Calu3 (cell line): ENCODE measurements at regions of chr4 and their contacts with region 1.

Region 1: DNA sequence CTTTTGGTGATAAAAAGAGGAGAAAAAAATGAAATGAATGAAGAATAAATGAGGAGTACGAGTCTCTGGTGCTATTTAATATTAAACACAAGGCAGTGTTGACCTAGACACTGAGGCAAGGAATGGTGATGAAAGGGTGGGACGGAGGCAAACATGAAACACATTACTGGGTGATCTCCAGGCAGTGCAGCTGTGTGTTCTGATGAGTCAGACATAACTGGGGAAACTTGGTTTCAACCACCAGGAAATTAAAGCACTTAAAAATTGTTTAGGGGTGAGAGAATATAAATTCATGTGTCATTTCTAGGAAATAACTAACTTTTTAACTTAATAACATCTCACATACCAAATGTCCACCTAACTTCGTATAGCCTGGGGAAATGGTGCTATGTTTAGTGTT is 19.7 kb upstream of the CXCL6 start:
- DNase-seq: peak; percentile 49
- H3K4me3 Mint-ChIP-seq: peak overlapping the region; percentile 5
- H3K27ac Mint-ChIP-seq: peak overlapping the region; percentile 95
- H3K4me1 Mint-ChIP-seq: peaks cover 57% of the 10 kb centered on the region
- H3K27me3 Mint-ChIP-seq: no peaks in the 10 kb centered on the region
- CTCF ChIP-seq: no peak

Region 2: GRCh38 chr4:73740353-73740778 is 76.4 kb before region 1 on chr4 and contains the start of gene CXCL8:
- CTCF ChIA-PET with region 1: no interaction called
- intact Hi-C with region 1: loop called (anchors 10 kb)
- DNase-seq: peak; percentile 77
- H3K4me3 Mint-ChIP-seq: peak within 1 kb of the TSS; percentile 64
- H3K27ac Mint-ChIP-seq: peak within 1 kb of the TSS; percentile 99
- H3K4me1 Mint-ChIP-seq: peaks cover 17% of the 10 kb centered on the region
- H3K27me3 Mint-ChIP-seq: no peaks in the 10 kb centered on the region
- CTCF ChIP-seq: no peak
- total RNA-seq, gene CXCL8: 222 and 404 TPM in 2 replicates

Region 3: GRCh38 chr4:73803213-73803612 is 13.6 kb before region 1 on chr4:
- CTCF ChIA-PET with region 1: no interaction called
- intact Hi-C with region 1: no loop called
- DNase-seq: no peak
- H3K4me3 Mint-ChIP-seq: no peak overlapping the region
- H3K27ac Mint-ChIP-seq: no peak overlapping the region
- H3K4me1 Mint-ChIP-seq: no peaks in the 10 kb centered on the region
- H3K27me3 Mint-ChIP-seq: no peaks in the 10 kb centered on the region
- CTCF ChIP-seq: no peak